B cell (primary cell): ENCODE measurements at regions of chr14 and their contacts with region 1.

Region 1: DNA sequence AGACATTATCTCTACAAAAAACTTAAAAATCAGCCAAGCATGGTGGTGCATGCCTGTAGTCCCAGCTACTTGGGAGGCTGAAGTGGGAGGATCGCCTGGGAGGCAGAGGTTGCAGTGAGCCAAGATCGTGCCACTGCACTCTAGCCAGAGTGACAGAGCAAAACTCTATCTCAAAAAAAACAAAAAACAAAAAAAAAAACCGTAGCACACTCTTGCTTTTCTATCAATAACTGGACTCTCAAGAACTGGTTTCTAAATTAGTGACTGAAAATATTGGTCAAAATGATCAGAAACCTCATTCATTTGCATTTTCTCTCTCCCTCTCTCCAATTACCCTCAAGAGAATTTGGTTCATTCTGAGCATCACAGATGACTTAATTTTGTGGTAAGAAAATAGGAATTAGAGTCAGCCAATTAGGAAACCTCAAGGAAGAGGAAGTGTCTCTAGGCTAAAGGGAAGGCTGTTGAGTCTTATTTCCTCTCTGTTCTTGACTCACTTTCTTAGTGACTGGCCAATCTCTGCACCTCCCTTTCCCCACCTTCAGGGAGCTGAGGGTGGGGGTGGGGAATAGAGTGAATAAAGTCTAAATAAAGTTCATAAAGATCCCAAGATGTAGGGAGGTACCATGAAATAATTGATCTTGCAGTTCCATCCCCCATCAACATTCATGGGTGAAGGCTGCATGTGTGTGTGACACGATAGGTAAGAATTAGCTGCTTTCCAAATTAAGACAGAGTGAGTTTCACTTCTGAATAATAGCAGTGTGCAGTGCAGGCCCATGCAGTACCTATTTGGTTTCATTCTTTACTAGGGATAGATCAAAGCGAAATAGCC is 6.8 kb upstream of the PSMA6 start:
- DNase-seq: peak; percentile 82
- ATAC-seq: peak; percentile 83
- H3K4me3 ChIP-seq: peak overlapping the region; percentile 10 to 41 (median 39)
- H3K4me3 Mint-ChIP-seq: peak overlapping the region; percentile 61
- H3K27ac ChIP-seq: peak overlapping the region; percentile 70 to 71
- H3K27ac Mint-ChIP-seq: peak overlapping the region; percentile 72
- H3K4me1 ChIP-seq: peaks cover 38% of the 10 kb centered on the region in 2 donors
- H3K4me1 Mint-ChIP-seq: peaks cover 39% of the 10 kb centered on the region
- H3K27me3 ChIP-seq: no peaks in the 10 kb centered on the region
- H3K27me3 Mint-ChIP-seq: peaks cover 5% of the 10 kb centered on the region
- CTCF ChIP-seq: no peak

Region 2: DNA sequence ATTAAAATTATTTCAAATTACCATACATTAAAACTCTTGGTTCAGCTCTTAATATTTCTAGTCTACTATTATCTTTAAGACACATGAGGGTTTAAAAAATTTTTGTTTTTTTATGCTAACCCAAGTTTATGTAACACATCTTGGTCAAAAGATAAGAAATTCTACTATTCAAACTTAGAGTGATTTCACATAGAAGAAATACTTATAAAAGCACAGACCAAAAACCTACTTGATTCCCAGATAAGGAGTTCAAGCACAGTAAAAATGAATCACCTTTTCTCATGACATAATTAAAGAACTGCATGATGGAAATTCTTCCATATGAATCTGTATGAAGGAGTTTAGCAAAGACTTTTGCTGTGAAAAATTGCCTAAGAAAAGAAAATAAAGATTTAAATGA is 177.5 kb before region 1 on chr14:
- CTCF ChIA-PET with region 1: no interaction called
- POLR2A ChIA-PET with region 1: no interaction called
- intact Hi-C with region 1: no loop called
- DNase-seq: no peak
- ATAC-seq: no peak
- H3K4me3 ChIP-seq: no peak overlapping the region
- H3K4me3 Mint-ChIP-seq: no peak overlapping the region
- H3K27ac ChIP-seq: no peak overlapping the region
- H3K27ac Mint-ChIP-seq: no peak overlapping the region
- H3K4me1 ChIP-seq: no peaks in the 10 kb centered on the region
- H3K4me1 Mint-ChIP-seq: no peaks in the 10 kb centered on the region
- H3K27me3 ChIP-seq: no peaks in the 10 kb centered on the region
- H3K27me3 Mint-ChIP-seq: no peaks in the 10 kb centered on the region
- CTCF ChIP-seq: no peak

Region 3: GRCh38 chr14:35174342-35174741 is 111.0 kb before region 1 on chr14:
- CTCF ChIA-PET with region 1: no interaction called
- POLR2A ChIA-PET with region 1: no interaction called
- intact Hi-C with region 1: no loop called
- DNase-seq: no peak
- ATAC-seq: no peak
- H3K4me3 ChIP-seq: no peak overlapping the region
- H3K4me3 Mint-ChIP-seq: no peak overlapping the region
- H3K27ac ChIP-seq: no peak overlapping the region
- H3K27ac Mint-ChIP-seq: no peak overlapping the region
- H3K4me1 ChIP-seq: no peaks in the 10 kb centered on the region
- H3K4me1 Mint-ChIP-seq: no peaks in the 10 kb centered on the region
- H3K27me3 ChIP-seq: no peaks in the 10 kb centered on the region
- H3K27me3 Mint-ChIP-seq: no peaks in the 10 kb centered on the region
- CTCF ChIP-seq: no peak

Region 4: DNA sequence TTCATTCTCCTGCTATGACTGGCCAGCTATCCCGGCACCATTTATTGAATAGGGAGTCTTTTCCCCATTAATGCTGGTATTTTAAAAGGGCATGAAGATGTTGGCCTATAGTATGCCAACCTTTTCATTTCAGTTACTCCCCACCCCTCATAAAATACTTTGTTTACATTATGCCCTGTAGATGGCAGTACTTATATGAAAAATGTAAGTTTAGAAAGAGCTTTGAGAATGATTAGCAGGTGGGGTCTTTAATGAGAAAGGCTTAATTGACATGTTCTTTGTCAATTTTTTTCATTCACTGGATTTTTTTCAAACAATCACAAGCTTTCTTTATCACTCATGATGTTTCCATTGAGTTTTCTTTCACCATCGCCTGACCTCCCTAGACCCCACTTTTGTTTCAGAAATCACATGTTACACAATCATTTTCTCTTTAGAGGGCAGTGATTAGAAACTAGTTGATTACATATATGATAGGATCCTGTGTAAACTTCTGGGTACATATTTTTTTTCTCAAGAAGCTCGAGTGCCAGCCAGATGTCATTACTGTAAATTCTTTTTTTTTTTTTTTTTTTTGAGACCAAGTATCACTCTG is 55.8 kb before region 1 on chr14:
- CTCF ChIA-PET with region 1: interaction called, 10 read pairs
- POLR2A ChIA-PET with region 1: no interaction called
- intact Hi-C with region 1: loop called (anchors 5 kb)
- DNase-seq: peak; percentile 57
- ATAC-seq: peak; percentile 36
- H3K4me3 ChIP-seq: no peak overlapping the region
- H3K4me3 Mint-ChIP-seq: no peak overlapping the region
- H3K27ac ChIP-seq: no peak overlapping the region
- H3K27ac Mint-ChIP-seq: no peak overlapping the region
- H3K4me1 ChIP-seq: no peaks in the 10 kb centered on the region
- H3K4me1 Mint-ChIP-seq: no peaks in the 10 kb centered on the region
- H3K27me3 ChIP-seq: no peaks in the 10 kb centered on the region
- H3K27me3 Mint-ChIP-seq: no peaks in the 10 kb centered on the region
- CTCF ChIP-seq: peak; percentile 67

Region 5: GRCh38 chr14:35240231-35240630 is 45.2 kb before region 1 on chr14:
- CTCF ChIA-PET with region 1: no interaction called
- POLR2A ChIA-PET with region 1: no interaction called
- intact Hi-C with region 1: loop called (anchors 1 kb)
- DNase-seq: no peak
- ATAC-seq: no peak
- H3K4me3 ChIP-seq: no peak overlapping the region
- H3K4me3 Mint-ChIP-seq: no peak overlapping the region
- H3K27ac ChIP-seq: no peak overlapping the region
- H3K27ac Mint-ChIP-seq: no peak overlapping the region
- H3K4me1 ChIP-seq: no peaks in the 10 kb centered on the region
- H3K4me1 Mint-ChIP-seq: no peaks in the 10 kb centered on the region
- H3K27me3 ChIP-seq: no peaks in the 10 kb centered on the region
- H3K27me3 Mint-ChIP-seq: no peaks in the 10 kb centered on the region
- CTCF ChIP-seq: no peak

Region 6: DNA sequence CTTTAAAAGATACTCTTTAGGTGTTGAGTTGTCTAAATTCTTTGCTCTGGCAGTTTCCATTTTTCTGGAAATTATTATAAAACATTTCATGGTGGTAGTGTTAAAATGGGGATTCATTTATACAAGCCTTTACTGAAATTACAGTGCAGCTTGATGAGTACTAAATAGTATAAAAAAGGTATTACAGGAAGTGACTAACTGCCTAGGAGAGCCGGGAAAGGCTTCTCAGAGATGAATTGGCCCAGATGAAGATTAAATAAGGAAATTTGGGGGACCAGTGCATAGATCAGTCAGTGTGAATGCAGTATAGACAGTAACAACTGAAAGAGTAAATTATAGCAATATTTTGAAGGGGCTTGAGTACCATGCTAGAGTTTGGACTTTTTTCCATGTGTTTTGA is 14.3 kb after region 1 on chr14:
- CTCF ChIA-PET with region 1: no interaction called
- POLR2A ChIA-PET with region 1: interaction called, 10 read pairs
- intact Hi-C with region 1: no loop called
- DNase-seq: no peak
- ATAC-seq: no peak
- H3K4me3 ChIP-seq: no peak overlapping the region
- H3K4me3 Mint-ChIP-seq: no peak overlapping the region
- H3K27ac ChIP-seq: peak overlapping the region in 1 of 2 donors; percentile 42
- H3K27ac Mint-ChIP-seq: no peak overlapping the region
- H3K4me1 ChIP-seq: peaks cover 29 to 35% of the 10 kb centered on the region in 2 donors
- H3K4me1 Mint-ChIP-seq: peaks cover 56% of the 10 kb centered on the region
- H3K27me3 ChIP-seq: no peaks in the 10 kb centered on the region
- H3K27me3 Mint-ChIP-seq: no peaks in the 10 kb centered on the region
- CTCF ChIP-seq: no peak